ENCODE measurements at regions of chr1 and their contacts with region 1.

Region 1: DNA sequence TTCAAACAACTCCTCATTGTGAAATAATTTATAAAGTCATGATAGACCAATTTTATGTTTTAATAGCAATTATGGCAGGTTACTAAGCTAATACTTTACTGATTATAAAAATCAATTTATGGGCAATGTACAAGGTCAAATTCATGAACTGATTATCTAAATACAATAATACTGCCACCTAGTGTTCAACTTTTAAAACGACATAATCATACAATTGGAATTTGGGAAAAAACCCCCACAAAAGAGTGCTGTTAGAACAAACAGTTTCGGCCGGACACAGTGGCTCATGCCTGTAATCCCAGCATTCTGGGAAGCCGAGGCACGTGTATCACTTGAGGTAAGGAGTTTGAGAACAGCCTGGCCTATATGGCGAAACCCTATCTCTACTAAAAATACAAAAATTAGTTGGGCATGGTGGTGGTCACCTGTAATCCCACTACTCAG is 14.0 kb downstream of the GTF2B start:
- DNase-seq: no peak
- ATAC-seq: peak; percentile 42
- H3K4me3 ChIP-seq: no peak overlapping the region
- H3K27ac ChIP-seq: no peak overlapping the region
- H3K4me1 ChIP-seq: no peaks in the 10 kb centered on the region
- H3K27me3 ChIP-seq: no peaks in the 10 kb centered on the region
- CTCF ChIP-seq: peak; percentile 77

Region 2: GRCh38 chr1:88608139-88608943 is 269.1 kb before region 1 on chr1:
- CTCF ChIA-PET with region 1: no interaction called
- POLR2A ChIA-PET with region 1: no interaction called
- in situ Hi-C with region 1: no loop called
- intact Hi-C with region 1: loop called (anchors 5 kb)
- DNase-seq: peak; percentile 39
- ATAC-seq: peak; percentile 82
- H3K4me3 ChIP-seq: no peak overlapping the region
- H3K27ac ChIP-seq: no peak overlapping the region
- H3K4me1 ChIP-seq: 0 out of 2 replicates have a peak, but pooled peaks cover 3% of the 10 kb centered on the region
- H3K27me3 ChIP-seq: peaks cover 3% of the 10 kb centered on the region; the same call in 1 of the 2 replicates
- CTCF ChIP-seq: peak; percentile 83

Region 3: GRCh38 chr1:88655685-88656299 is 221.6 kb before region 1 on chr1:
- CTCF ChIA-PET with region 1: no interaction called
- POLR2A ChIA-PET with region 1: no interaction called
- in situ Hi-C with region 1: no loop called
- intact Hi-C with region 1: loop called (anchors 10 kb)
- DNase-seq: peak; percentile 18
- ATAC-seq: no peak
- H3K4me3 ChIP-seq: no peak overlapping the region
- H3K27ac ChIP-seq: no peak overlapping the region
- H3K4me1 ChIP-seq: no peaks in the 10 kb centered on the region
- H3K27me3 ChIP-seq: no peaks in the 10 kb centered on the region; the same call in 1 of the 2 replicates
- CTCF ChIP-seq: peak; percentile 66; the same call in 1 of the 2 replicates

Region 4: GRCh38 chr1:88763649-88764406 is 113.6 kb before region 1 on chr1:
- CTCF ChIA-PET with region 1: no interaction called
- POLR2A ChIA-PET with region 1: no interaction called
- in situ Hi-C with region 1: no loop called
- intact Hi-C with region 1: no loop called
- DNase-seq: no peak
- ATAC-seq: no peak
- H3K4me3 ChIP-seq: no peak overlapping the region
- H3K27ac ChIP-seq: no peak overlapping the region
- H3K4me1 ChIP-seq: no peaks in the 10 kb centered on the region
- H3K27me3 ChIP-seq: no peaks in the 10 kb centered on the region
- CTCF ChIP-seq: no peak

Region 5: GRCh38 chr1:88800382-88801051 is 76.9 kb before region 1 on chr1:
- CTCF ChIA-PET with region 1: no interaction called
- POLR2A ChIA-PET with region 1: no interaction called
- in situ Hi-C with region 1: no loop called
- intact Hi-C with region 1: loop called (anchors 10 kb)
- DNase-seq: peak; percentile 15
- ATAC-seq: peak; percentile 84
- H3K4me3 ChIP-seq: no peak overlapping the region
- H3K27ac ChIP-seq: no peak overlapping the region
- H3K4me1 ChIP-seq: no peaks in the 10 kb centered on the region
- H3K27me3 ChIP-seq: no peaks in the 10 kb centered on the region
- CTCF ChIP-seq: peak; percentile 82; the same call in 1 of the 2 replicates

Region 6: DNA sequence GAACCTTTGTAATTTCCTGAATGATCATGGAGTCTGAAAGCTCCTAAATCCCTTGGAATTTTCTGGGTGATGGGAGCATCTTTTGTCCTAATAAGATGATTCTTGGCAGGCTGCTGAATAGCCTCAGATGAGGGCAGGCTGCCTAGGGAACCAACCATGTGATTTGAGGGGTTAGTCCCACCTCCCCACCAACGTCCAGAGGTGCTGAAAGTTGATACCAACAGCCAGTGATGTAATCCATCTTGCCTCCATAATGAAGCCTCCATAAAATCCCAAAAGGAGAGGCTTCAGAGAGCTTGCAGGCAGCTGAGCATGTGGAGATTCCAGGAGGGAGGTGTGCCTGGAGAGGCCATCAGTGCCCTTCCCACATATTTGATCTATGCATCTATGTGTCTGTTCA is 29.8 kb before region 1 on chr1:
- CTCF ChIA-PET with region 1: no interaction called
- POLR2A ChIA-PET with region 1: interaction called, 13 read pairs
- in situ Hi-C with region 1: no loop called
- intact Hi-C with region 1: no loop called
- DNase-seq: no peak
- ATAC-seq: no peak
- H3K4me3 ChIP-seq: no peak overlapping the region
- H3K27ac ChIP-seq: no peak overlapping the region
- H3K4me1 ChIP-seq: no peaks in the 10 kb centered on the region
- H3K27me3 ChIP-seq: no peaks in the 10 kb centered on the region
- CTCF ChIP-seq: no peak

Region 7: GRCh38 chr1:88946861-88947260 is 69.5 kb after region 1 on chr1:
- CTCF ChIA-PET with region 1: no interaction called
- POLR2A ChIA-PET with region 1: no interaction called
- in situ Hi-C with region 1: no loop called
- intact Hi-C with region 1: no loop called
- DNase-seq: no peak
- ATAC-seq: no peak
- H3K4me3 ChIP-seq: no peak overlapping the region
- H3K27ac ChIP-seq: no peak overlapping the region
- H3K4me1 ChIP-seq: no peaks in the 10 kb centered on the region
- H3K27me3 ChIP-seq: no peaks in the 10 kb centered on the region
- CTCF ChIP-seq: no peak

Region 8: GRCh38 chr1:89104147-89104546 is 226.7 kb after region 1 on chr1:
- CTCF ChIA-PET with region 1: no interaction called
- POLR2A ChIA-PET with region 1: no interaction called
- in situ Hi-C with region 1: no loop called
- intact Hi-C with region 1: no loop called
- DNase-seq: no peak
- ATAC-seq: no peak
- H3K4me3 ChIP-seq: no peak overlapping the region
- H3K27ac ChIP-seq: no peak overlapping the region
- H3K4me1 ChIP-seq: no peaks in the 10 kb centered on the region
- H3K27me3 ChIP-seq: peaks cover 4% of the 10 kb centered on the region
- CTCF ChIP-seq: no peak

Region 9: DNA sequence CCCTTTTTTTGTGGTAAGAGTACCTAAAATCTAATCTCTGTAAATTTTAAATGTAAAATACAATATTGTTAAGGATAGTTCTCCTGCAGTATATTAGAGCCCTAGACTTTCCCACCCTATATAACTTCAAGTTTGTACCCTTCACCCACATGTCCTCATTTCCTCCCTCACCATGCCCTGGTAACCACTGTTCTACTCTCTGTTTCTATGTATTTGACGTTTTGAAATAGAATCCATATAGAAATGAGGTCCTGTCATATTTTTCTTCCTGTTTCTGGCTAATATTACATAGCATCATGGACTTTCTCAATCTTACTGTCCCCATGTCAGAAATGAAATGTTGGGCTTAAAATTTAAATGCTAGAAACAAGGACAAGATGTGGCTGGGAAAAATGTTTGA is 273.6 kb after region 1 on chr1:
- CTCF ChIA-PET with region 1: no interaction called
- POLR2A ChIA-PET with region 1: no interaction called
- in situ Hi-C with region 1: no loop called
- intact Hi-C with region 1: no loop called
- DNase-seq: no peak
- ATAC-seq: no peak
- H3K4me3 ChIP-seq: no peak overlapping the region
- H3K27ac ChIP-seq: no peak overlapping the region
- H3K4me1 ChIP-seq: no peaks in the 10 kb centered on the region
- H3K27me3 ChIP-seq: no peaks in the 10 kb centered on the region
- CTCF ChIP-seq: no peak